Aorta (tissue), 5 donors: ENCODE measurements at regions of chr5 and their contacts with region 1.

Region 1: GRCh38 chr5:32312647-32313523 is at the start of gene MTMR12:
- DNase-seq: peak; percentile 100
- ATAC-seq: peak; percentile 100
- H3K4me3 ChIP-seq: peak within 1 kb of the TSS; percentile 81 to 97
- H3K27ac ChIP-seq: peak within 1 kb of the TSS; percentile 92 to 97
- H3K4me1 ChIP-seq: no peaks in the 10 kb centered on the region
- H3K27me3 ChIP-seq: no peaks in the 10 kb centered on the region
- total RNA-seq, gene MTMR12: 36.9 to 37.8 TPM

Region 2: GRCh38 chr5:32174011-32174870 is 138.6 kb before region 1 on chr5 and contains the start of gene GOLPH3:
- intact Hi-C with region 1: loop called in 1 of 2 experiments (anchors 5 kb)
- DNase-seq: peak; percentile 96 to 98
- ATAC-seq: peak; percentile 96
- H3K4me3 ChIP-seq: peak within 1 kb of the TSS; percentile 62 to 91
- H3K27ac ChIP-seq: peak within 1 kb of the TSS; percentile 78 to 98
- H3K4me1 ChIP-seq: no peaks in the 10 kb centered on the region
- H3K27me3 ChIP-seq: no peaks in the 10 kb centered on the region
- total RNA-seq, gene GOLPH3: 84.9 to 92.0 TPM